Transverse colon (tissue), 4 donors: ENCODE measurements at regions of chr11 and their contacts with region 1.

Region 1: GRCh38 chr11:1564535-1565172 is 7.4 kb downstream of the DUSP8 start:
- DNase-seq: peak; percentile 69
- H3K4me3 ChIP-seq: no peak overlapping the region
- H3K27ac ChIP-seq: peak overlapping the region; percentile 20 to 77 (median 58)
- H3K4me1 ChIP-seq: peaks cover 25 to 53% (median 35%) of the 10 kb centered on the region in 4 donors
- H3K27me3 ChIP-seq: no peaks in the 10 kb centered on the region
- CTCF ChIP-seq: no peak
- EP300 ChIP-seq: no peak
- POLR2A ChIP-seq: no peak

Region 2: GRCh38 chr11:1586699-1587098 is 22.0 kb after region 1 on chr11:
- in situ Hi-C with region 1: no loop called
- intact Hi-C with region 1: no loop called
- DNase-seq: no peak
- H3K4me3 ChIP-seq: no peak overlapping the region
- H3K27ac ChIP-seq: no peak overlapping the region
- H3K4me1 ChIP-seq: peaks cover 0 to 9% (median 2%) of the 10 kb centered on the region in 4 donors
- H3K27me3 ChIP-seq: no peaks in the 10 kb centered on the region
- CTCF ChIP-seq: no peak
- EP300 ChIP-seq: no peak
- POLR2A ChIP-seq: no peak

Region 3: DNA sequence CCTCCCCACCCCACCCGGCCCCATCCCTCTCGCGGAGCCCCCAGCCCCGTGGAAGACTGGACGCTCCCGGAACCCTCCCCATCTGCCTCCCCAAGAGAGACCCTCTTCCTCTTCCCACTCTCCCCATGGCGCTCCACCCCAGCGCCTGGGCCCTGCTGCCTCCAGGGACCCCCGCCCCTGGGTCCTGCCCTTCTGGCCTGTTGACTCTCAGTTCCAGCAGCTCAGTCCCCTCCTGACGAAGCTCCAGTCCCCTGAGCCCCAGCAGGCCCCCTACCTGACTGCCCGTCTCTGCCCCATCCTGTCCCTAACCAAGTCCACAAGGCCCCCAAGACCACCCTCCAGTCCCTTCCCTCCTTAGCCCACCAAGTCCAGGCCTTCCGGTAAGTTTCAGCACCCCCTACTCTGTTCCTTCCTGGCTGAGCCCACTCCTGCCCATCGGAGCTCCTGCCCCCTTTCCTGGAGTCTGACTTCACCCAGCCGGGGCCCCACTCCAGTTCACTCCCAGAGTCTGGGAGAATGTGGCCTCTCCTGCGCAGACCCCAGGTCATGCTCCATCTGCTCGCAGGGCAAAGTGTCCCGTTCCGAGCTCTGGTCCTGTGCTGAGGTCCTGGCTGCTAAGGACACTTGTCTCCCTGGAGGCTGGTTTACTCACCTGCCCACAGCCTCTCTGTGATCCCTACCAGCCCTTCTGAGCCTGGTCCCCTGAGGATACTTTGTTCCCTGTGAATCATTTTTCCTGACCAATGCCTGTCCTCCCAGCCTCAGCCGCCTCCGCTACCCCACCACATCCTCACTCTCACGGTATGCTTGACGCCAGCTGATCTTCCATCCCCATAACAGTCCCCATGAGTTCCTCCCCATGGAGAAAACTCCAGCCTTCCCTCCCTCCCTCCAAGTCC is 185.0 kb after region 1 on chr11:
- in situ Hi-C with region 1: no loop called
- intact Hi-C with region 1: no loop called
- DNase-seq: peak; percentile 11
- H3K4me3 ChIP-seq: peak overlapping the region in 2 of 4 donors; percentile 14 to 31
- H3K27ac ChIP-seq: no peak overlapping the region
- H3K4me1 ChIP-seq: peaks cover 3 to 17% (median 8%) of the 10 kb centered on the region in 4 donors
- H3K27me3 ChIP-seq: peaks cover 27% of the 10 kb centered on the region
- CTCF ChIP-seq: no peak
- EP300 ChIP-seq: no peak
- POLR2A ChIP-seq: peak; percentile 33

Region 4: GRCh38 chr11:2382936-2383851 is 818.5 kb after region 1 on chr11:
- in situ Hi-C with region 1: no loop called
- intact Hi-C with region 1: loop called (anchors 10 kb)
- DNase-seq: peak; percentile 58
- H3K4me3 ChIP-seq: no peak overlapping the region
- H3K27ac ChIP-seq: peak overlapping the region; percentile 92 to 99 (median 96)
- H3K4me1 ChIP-seq: peaks cover 76 to 97% (median 92%) of the 10 kb centered on the region in 4 donors
- H3K27me3 ChIP-seq: no peaks in the 10 kb centered on the region
- CTCF ChIP-seq: no peak
- EP300 ChIP-seq: no peak
- POLR2A ChIP-seq: no peak